T-cell (primary cell): ENCODE measurements at regions of chr12 and their contacts with region 1.

Region 1: DNA sequence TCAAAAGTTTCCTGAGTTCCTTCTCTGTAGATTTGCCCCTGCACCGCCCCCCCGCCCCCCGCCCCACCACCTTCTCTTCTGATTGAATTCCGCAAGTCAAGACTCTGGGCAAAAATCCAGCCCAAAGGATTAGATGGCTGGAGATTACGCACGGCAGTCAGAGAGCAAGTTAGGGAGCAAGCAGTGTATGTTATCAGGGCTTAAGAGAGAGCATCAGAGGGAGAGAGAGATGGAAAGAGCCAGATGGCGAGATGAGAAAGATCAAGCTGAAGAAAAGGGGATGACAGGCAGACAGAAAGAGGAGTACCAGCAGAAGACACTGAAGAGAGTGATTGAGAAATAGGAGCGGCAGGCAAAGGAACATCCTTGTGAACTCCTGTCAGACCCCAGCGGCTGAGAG is 13.9 kb upstream of the ANKRD33 start:
- DNase-seq: no peak
- ATAC-seq: no peak
- H3K4me3 ChIP-seq: no peak overlapping the region
- H3K4me3 Mint-ChIP-seq: no peak overlapping the region
- H3K27ac ChIP-seq: no peak overlapping the region
- H3K27ac Mint-ChIP-seq: no peak overlapping the region
- H3K4me1 ChIP-seq: peaks cover 0 to 8% of the 10 kb centered on the region in 2 experiments
- H3K4me1 Mint-ChIP-seq: peaks cover 0 to 6% (median 1%) of the 10 kb centered on the region in 3 donors
- H3K27me3 ChIP-seq: peaks cover 0 to 39% of the 10 kb centered on the region in 2 experiments
- H3K27me3 Mint-ChIP-seq: peaks cover 15 to 26% of the 10 kb centered on the region in 2 donors

Region 2: DNA sequence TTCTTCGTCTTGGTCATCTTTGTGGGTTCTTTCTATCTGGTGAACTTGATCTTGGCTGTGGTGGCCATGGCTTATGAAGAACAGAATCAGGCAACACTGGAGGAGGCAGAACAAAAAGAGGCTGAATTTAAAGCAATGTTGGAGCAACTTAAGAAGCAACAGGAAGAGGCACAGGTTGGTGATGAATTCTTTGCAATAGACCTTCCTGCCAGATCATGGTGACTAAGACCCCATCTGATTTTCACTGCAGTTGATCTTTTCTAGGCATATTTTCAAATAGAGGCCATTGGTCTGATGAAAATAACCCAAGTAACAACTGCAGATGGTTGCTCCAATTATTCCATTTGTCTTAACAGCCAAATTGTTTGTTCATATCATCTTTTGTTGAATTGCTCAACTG is 168.6 kb before region 1 on chr12:
- CTCF ChIA-PET with region 1: no interaction called
- POLR2A ChIA-PET with region 1: no interaction called
- DNase-seq: no peak
- ATAC-seq: no peak
- H3K4me3 ChIP-seq: no peak overlapping the region
- H3K4me3 Mint-ChIP-seq: no peak overlapping the region
- H3K27ac ChIP-seq: no peak overlapping the region
- H3K27ac Mint-ChIP-seq: no peak overlapping the region
- H3K4me1 ChIP-seq: no peaks in the 10 kb centered on the region
- H3K4me1 Mint-ChIP-seq: no peaks in the 10 kb centered on the region
- H3K27me3 ChIP-seq: peaks cover 0 to 3% of the 10 kb centered on the region in 2 experiments
- H3K27me3 Mint-ChIP-seq: no peaks in the 10 kb centered on the region

Region 3: GRCh38 chr12:52266514-52267205 is 392.6 kb after region 1 on chr12:
- CTCF ChIA-PET with region 1: no interaction called
- POLR2A ChIA-PET with region 1: interaction called in 1 of 2 experiments, 12 read pairs
- DNase-seq: no peak
- ATAC-seq: no peak
- H3K4me3 ChIP-seq: no peak overlapping the region
- H3K4me3 Mint-ChIP-seq: no peak overlapping the region
- H3K27ac ChIP-seq: no peak overlapping the region
- H3K27ac Mint-ChIP-seq: no peak overlapping the region
- H3K4me1 ChIP-seq: no peaks in the 10 kb centered on the region
- H3K4me1 Mint-ChIP-seq: no peaks in the 10 kb centered on the region
- H3K27me3 ChIP-seq: peaks cover 3 to 31% of the 10 kb centered on the region in 2 experiments
- H3K27me3 Mint-ChIP-seq: peaks cover 20 to 26% of the 10 kb centered on the region in 2 donors